Activated CD8-positive, alpha-beta T cell treated with anti-CD3 and anti-CD28 coated beads, Interleukin-2, amount 10 ng/mL, durations not matched to agents 7 days and 5 days (primary cell): ENCODE measurements at regions of chr13 and their contacts with region 1.

Region 1: DNA sequence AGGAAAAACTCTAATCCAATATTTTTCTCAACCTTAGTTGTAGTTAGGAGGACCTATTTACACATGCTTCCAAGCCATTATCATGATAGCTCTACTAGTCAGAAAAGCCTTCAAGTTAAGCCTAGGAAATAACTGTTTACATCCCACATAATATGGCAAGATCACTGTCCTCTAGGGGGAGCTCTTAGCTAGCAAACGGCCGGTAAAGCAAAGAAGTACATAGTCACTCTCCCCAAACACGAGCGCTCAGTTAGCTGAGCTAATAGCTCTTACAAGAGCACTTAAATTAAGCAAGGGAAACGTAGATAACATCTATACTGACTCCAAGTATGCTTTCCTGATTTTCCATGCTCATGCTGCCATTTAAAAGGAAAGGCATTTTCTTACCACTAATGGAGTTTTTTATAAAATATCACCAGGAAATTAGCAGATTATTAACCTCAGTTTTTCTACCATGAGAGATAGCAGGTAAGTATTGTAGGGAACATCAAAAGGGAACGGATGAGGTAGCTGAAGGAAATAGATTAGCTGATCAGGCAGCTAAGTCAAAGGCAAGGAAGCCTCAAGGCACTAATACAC is 100.6 kb upstream of the PABPC3 start:
- DNase-seq: peak; percentile 78
- ATAC-seq: peak; percentile 85
- H3K4me3 Mint-ChIP-seq: no peak overlapping the region
- H3K27ac Mint-ChIP-seq: no peak overlapping the region
- H3K4me1 Mint-ChIP-seq: peaks cover 2% of the 10 kb centered on the region
- H3K27me3 Mint-ChIP-seq: peaks cover 25% of the 10 kb centered on the region

Region 2: GRCh38 chr13:24931450-24932251 is 63.7 kb before region 1 on chr13:
- CTCF ChIA-PET with region 1: no interaction called
- POLR2A ChIA-PET with region 1: no interaction called
- DNase-seq: no peak
- ATAC-seq: no peak
- H3K4me3 Mint-ChIP-seq: peak overlapping the region; percentile 3
- H3K27ac Mint-ChIP-seq: no peak overlapping the region
- H3K4me1 Mint-ChIP-seq: peaks cover 5% of the 10 kb centered on the region
- H3K27me3 Mint-ChIP-seq: peaks cover 41% of the 10 kb centered on the region

Region 3: DNA sequence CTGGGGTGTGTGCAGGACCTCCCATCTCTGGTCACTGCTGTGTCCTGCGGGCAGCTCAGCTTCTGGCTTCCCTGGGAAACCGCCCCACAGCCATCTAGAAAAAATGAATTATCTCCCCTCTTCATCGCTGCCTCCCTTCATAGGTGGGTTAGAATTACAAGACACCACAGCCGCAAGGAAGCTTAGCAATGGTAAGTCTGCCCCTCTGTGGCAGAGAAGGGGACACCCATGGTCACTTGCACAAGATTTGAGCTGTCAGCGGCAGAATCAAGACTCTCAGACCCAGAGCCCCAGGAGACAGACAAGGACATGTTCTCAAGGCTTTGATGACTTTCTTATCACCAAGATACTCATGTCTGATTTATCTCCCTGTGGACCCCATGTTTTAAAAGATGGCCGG is 10.2 kb before region 1 on chr13:
- CTCF ChIA-PET with region 1: interaction called, 11 read pairs
- POLR2A ChIA-PET with region 1: no interaction called
- DNase-seq: no peak
- ATAC-seq: no peak
- H3K4me3 Mint-ChIP-seq: no peak overlapping the region
- H3K27ac Mint-ChIP-seq: no peak overlapping the region
- H3K4me1 Mint-ChIP-seq: no peaks in the 10 kb centered on the region
- H3K27me3 Mint-ChIP-seq: peaks cover 27% of the 10 kb centered on the region

Region 4: GRCh38 chr13:25018729-25019115 is 23.4 kb after region 1 on chr13:
- CTCF ChIA-PET with region 1: interaction called, 12 read pairs
- POLR2A ChIA-PET with region 1: interaction called, 5 read pairs
- DNase-seq: no peak
- ATAC-seq: no peak
- H3K4me3 Mint-ChIP-seq: no peak overlapping the region
- H3K27ac Mint-ChIP-seq: no peak overlapping the region
- H3K4me1 Mint-ChIP-seq: peaks cover 11% of the 10 kb centered on the region
- H3K27me3 Mint-ChIP-seq: peaks cover 40% of the 10 kb centered on the region

Region 5: DNA sequence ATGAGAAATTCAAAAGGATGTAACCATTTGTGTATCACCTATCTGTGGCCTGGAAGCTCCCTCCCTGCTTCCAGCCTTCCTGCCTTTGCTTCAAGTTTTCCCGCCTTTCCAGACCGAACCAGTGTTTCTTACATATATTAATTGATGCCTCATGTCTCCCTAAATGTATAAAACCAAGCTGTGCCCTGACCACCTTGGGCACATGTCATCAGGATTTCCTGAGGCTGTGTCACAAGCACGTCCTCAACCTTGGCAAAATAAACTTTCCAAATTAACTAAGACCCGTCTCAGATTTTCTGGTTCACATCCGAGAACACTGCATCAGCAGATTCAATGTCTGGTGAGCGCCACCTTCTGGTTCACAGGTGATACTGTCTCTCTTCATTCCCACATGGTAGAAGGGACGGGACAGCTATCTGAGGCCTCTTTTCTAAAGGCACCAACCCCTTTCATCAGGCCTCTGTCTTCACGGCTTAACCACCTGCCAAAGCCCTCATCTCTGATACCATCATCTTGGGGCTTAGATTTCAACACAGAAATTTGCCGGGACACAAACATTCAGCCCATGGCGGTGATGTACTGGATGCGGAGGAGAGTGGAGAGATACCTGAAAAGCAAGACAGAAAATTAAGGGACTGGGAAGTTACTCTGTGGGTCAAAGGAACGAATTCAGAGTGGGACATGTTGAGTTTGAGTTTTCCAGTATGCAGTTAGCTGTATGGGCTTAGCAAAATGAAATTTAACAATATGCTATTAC is 41.9 kb after region 1 on chr13:
- CTCF ChIA-PET with region 1: interaction called, 13 read pairs
- POLR2A ChIA-PET with region 1: no interaction called
- DNase-seq: peak; percentile 67
- ATAC-seq: peak; percentile 76
- H3K4me3 Mint-ChIP-seq: no peak overlapping the region
- H3K27ac Mint-ChIP-seq: no peak overlapping the region
- H3K4me1 Mint-ChIP-seq: no peaks in the 10 kb centered on the region
- H3K27me3 Mint-ChIP-seq: peaks cover 21% of the 10 kb centered on the region

Region 6: GRCh38 chr13:25114220-25114619 is 118.9 kb after region 1 on chr13:
- CTCF ChIA-PET with region 1: interaction called, 11 read pairs
- POLR2A ChIA-PET with region 1: no interaction called
- DNase-seq: peak; percentile 74
- ATAC-seq: peak; percentile 79
- H3K4me3 Mint-ChIP-seq: no peak overlapping the region
- H3K27ac Mint-ChIP-seq: no peak overlapping the region
- H3K4me1 Mint-ChIP-seq: peaks cover 5% of the 10 kb centered on the region
- H3K27me3 Mint-ChIP-seq: peaks cover 19% of the 10 kb centered on the region